ENCODE measurements at regions of chr4 and their contacts with region 1.

Region 1: GRCh38 chr4:16289897-16290554 is 63.8 kb upstream of the TAPT1 start:
- DNase-seq: peak; percentile 12
- H3K4me3 ChIP-seq: no peak overlapping the region
- CTCF ChIP-seq: peak; percentile 28

Region 2: GRCh38 chr4:16034010-16034829 is 255.8 kb before region 1 on chr4:
- CTCF ChIA-PET with region 1: no interaction called
- POLR2A ChIA-PET with region 1: no interaction called
- DNase-seq: peak; percentile 65
- H3K4me3 ChIP-seq: no peak overlapping the region
- CTCF ChIP-seq: no peak

Region 3: DNA sequence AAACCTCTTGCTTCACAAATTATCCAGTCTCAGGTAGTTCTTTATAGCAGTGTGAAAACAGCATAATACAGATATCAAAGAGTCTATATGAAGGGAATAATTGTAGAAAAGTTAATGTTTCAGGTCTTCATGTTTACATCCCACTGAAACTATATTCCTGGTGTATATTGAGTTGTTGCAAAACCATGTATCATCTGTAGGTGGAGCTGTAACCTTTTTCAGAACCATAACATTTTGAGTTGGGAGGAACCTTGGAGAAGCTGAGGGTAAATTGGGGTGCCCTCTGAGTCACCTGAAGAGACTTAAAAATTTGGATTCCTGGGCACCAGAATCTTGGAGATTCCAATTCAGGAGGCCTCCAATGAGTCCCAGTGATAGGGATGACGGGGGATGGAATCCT is 11.8 kb before region 1 on chr4:
- CTCF ChIA-PET with region 1: interaction called, 20 read pairs
- POLR2A ChIA-PET with region 1: no interaction called
- DNase-seq: no peak
- H3K4me3 ChIP-seq: no peak overlapping the region
- CTCF ChIP-seq: peak; percentile 16

Region 4: DNA sequence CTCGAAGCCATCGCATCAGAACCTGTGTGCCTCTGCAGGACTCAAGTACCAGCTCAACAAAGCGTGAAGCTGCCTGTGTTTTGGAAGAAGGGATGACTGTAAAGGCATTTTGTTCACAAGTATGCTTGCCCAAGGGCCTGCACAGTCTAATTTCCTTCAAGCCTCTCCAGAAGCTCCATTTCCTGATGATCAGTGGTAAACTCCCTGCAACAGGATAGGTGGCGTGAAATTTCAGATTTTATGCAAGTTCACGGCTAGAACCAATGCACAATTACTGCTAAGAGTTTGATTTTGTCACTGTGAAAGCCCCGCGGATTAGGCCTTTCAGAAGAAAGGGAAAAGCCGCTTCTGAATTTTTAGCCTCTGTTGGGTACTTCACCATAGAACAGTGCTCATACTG is 25.4 kb after region 1 on chr4:
- CTCF ChIA-PET with region 1: interaction called, 10 read pairs
- POLR2A ChIA-PET with region 1: no interaction called
- DNase-seq: no peak
- H3K4me3 ChIP-seq: no peak overlapping the region
- CTCF ChIP-seq: no peak

Region 5: DNA sequence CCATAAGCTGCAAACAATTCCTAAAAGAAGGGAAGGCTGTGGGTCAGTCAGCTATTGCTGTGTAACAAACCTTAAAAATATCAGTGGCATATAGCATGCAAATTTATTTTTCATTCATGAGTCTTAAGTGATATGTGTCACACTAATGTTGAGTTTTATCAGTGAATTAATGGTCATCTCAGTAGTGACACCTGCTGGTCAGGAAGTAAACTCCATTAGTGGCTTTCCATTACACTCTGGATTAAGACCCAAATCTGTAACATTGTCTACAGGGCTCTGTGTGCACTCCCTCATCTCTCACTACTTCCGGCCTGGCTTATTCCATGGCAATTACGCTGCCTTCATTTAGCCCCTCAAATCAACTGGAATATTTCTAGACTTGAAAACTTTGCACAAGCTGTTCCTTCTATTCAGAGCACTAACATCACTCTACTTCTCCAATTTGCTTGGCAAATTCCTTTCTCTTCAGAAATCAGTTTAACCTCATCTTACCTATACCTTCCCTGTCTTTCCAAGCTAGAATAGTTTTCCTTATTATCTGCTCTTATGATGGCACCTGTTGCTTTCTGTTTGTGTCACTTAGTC is 153.6 kb after region 1 on chr4:
- CTCF ChIA-PET with region 1: interaction called, 150 read pairs
- POLR2A ChIA-PET with region 1: no interaction called
- DNase-seq: no peak
- H3K4me3 ChIP-seq: no peak overlapping the region
- CTCF ChIP-seq: peak; percentile 64

Region 6: GRCh38 chr4:16450724-16451123 is 160.7 kb after region 1 on chr4:
- CTCF ChIA-PET with region 1: interaction called, 150 read pairs
- POLR2A ChIA-PET with region 1: no interaction called
- DNase-seq: no peak
- H3K4me3 ChIP-seq: no peak overlapping the region
- CTCF ChIP-seq: peak; percentile 12

Region 7: DNA sequence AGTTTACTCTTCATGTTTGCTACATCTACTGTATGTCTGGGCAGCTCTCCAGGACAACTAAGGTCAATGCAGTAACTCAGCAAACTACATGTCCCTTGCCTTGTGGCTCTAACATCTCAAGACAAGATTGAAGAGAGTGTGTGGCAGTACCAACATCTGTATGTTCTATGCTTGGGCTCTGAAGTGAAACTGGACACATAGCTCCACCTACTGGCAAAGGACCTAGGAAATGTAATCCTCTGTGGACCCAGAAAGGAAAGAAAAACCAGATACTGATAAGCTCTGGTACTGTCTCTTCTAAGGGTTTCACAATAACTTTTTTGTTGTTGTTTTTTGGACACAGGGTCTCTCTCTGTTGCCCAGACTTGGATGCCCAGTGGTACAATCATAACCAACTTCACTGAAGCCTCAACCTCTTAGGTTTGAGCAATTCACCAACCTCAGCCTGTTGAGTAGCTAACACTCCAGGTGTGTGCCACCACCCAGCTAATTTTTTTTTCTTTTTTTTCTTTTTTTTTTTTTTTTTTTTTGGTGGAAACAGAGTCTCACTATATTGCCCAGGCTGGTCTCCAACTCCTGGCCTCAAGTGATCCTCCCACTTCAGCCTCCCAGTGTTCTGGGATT is 1157.8 kb after region 1 on chr4:
- CTCF ChIA-PET with region 1: interaction called, 50 read pairs
- POLR2A ChIA-PET with region 1: no interaction called
- DNase-seq: no peak
- H3K4me3 ChIP-seq: no peak overlapping the region
- CTCF ChIP-seq: peak; percentile 66

Measured in AG04449 (cell line).